ENCODE measurements at regions of chr2 and their contacts with region 1.

Region 1: GRCh38 chr2:235595422-235596010 is 101.7 kb downstream of the AGAP1 start:
- DNase-seq: peak; percentile 49 to 68 (median 52)
- ATAC-seq: peak; percentile 81
- H3K4me3 ChIP-seq: no peak overlapping the region
- H3K27ac ChIP-seq: no peak overlapping the region
- H3K4me1 ChIP-seq: peaks cover 0 to 4% of the 10 kb centered on the region in 2 experiments; a peak in 2 of 5 replicates
- H3K27me3 ChIP-seq: no peaks in the 10 kb centered on the region
- CTCF ChIP-seq: peak; percentile 55 to 75 (median 71); a peak in 5 of 6 replicates
- EP300 ChIP-seq: no peak
- POLR2A ChIP-seq: no peak
- RAD21 ChIP-seq: peak; percentile 54 to 75

Region 2: GRCh38 chr2:235135990-235136561 is 459.4 kb before region 1 on chr2:
- CTCF ChIA-PET with region 1: interaction called, 11 read pairs
- POLR2A ChIA-PET with region 1: interaction called, 3 read pairs
- in situ Hi-C with region 1: no loop called
- intact Hi-C with region 1: loop called (anchors 2 kb)
- DNase-seq: peak; percentile 57 to 65 (median 60)
- ATAC-seq: peak; percentile 89
- H3K4me3 ChIP-seq: no peak overlapping the region
- H3K27ac ChIP-seq: no peak overlapping the region
- H3K4me1 ChIP-seq: no peaks in the 10 kb centered on the region
- H3K27me3 ChIP-seq: peaks cover 0 to 14% of the 10 kb centered on the region in 2 experiments; a peak in 2 of 5 replicates
- CTCF ChIP-seq: peak; percentile 62 to 67 (median 63)
- EP300 ChIP-seq: no peak
- POLR2A ChIP-seq: no peak
- RAD21 ChIP-seq: peak; percentile 32 to 59; a peak in 2 of 4 replicates

Region 3: DNA sequence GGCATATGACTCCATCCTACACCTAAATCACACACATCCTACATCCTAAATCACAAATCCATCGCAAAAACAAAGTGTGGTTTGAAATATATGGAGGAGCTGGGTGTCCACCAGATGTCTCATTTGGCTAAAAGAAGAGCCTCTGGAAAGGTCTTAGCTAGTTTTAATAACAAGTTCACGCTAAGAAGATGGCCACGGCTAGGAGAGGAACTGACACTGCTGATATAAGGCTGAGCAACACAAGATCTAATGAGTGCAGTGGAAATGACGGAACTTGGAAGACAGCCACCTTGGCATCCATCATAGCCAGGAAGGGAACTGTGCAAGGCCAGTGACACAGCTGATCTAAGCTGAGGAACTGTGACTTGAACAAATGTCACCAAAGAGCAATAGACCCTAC is 161.7 kb before region 1 on chr2:
- CTCF ChIA-PET with region 1: interaction called, 18 read pairs
- POLR2A ChIA-PET with region 1: no interaction called
- in situ Hi-C with region 1: no loop called
- intact Hi-C with region 1: loop called (anchors 1 kb)
- DNase-seq: peak in 2 of 4 experiments; percentile 41 to 52
- ATAC-seq: peak; percentile 96
- H3K4me3 ChIP-seq: no peak overlapping the region
- H3K27ac ChIP-seq: peak overlapping the region; percentile 32; the same call in 1 of the 3 replicates
- H3K4me1 ChIP-seq: peaks cover 0 to 8% of the 10 kb centered on the region in 2 experiments; a peak in 3 of 5 replicates
- H3K27me3 ChIP-seq: no peaks in the 10 kb centered on the region
- CTCF ChIP-seq: peak; percentile 39 to 75 (median 48); a peak in 5 of 6 replicates
- EP300 ChIP-seq: peak; percentile 44; the same call in 1 of the 2 replicates
- POLR2A ChIP-seq: no peak
- RAD21 ChIP-seq: peak; percentile 82 to 88

Region 4: DNA sequence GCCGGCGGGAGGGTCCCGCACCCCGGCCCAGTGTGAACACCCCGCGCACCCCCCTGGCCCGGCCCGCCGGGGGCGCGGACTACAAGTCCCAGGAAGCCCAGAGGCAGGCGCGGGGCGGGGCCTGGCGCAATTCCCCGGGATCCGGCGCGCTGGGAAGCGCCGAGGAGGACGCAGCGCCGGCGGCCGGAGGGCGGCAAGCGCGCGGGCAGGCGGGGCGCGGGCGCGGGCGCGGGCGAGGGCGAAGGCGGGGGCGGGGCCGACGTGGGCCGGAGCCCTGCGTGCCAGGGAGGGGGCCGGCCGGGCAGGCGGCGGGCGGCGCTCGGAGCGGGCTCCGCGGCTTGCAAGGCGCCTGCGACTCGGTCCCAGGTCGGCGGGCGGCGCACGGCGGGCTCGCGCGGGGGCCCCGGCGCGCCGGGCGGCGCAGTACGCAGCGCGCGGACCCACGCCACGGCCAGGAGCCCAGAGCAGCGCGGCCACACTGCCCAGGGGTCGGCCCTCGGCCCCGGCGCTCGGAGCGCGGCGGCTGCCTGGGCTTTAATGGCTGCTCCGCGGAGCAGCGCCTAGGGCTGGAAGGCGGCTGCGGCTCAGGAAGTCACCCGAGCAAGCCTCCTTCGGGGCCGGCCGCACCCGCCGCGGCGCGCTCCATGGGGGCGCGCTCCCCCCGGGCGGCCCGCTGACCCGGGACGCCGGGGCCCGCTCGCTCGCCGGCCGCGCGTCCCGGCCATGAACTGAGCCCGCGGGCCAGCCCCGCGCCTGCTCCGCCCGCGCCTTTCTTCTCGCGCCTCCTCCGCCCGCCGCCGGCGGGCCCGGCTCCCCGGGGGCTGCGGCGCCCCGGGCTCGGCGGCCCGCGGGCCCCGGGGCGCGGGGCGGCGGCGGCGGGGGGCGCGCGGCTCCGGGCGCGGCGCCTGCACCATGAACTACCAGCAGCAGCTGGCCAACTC is 101.5 kb before region 1 on chr2 and contains the start of gene AGAP1:
- CTCF ChIA-PET with region 1: no interaction called
- POLR2A ChIA-PET with region 1: no interaction called
- in situ Hi-C with region 1: no loop called
- intact Hi-C with region 1: loop called (anchors 5 kb)
- DNase-seq: peak; percentile 80 to 85 (median 83)
- ATAC-seq: peak; percentile 81
- H3K4me3 ChIP-seq: peak within 1 kb of the TSS; percentile 62
- H3K27ac ChIP-seq: peak within 1 kb of the TSS; percentile 66; the same call in 2 of the 3 replicates
- H3K4me1 ChIP-seq: peaks cover 28 to 38% of the 10 kb centered on the region in 2 experiments; a peak in 4 of 5 replicates
- H3K27me3 ChIP-seq: no peaks in the 10 kb centered on the region
- CTCF ChIP-seq: no peak
- EP300 ChIP-seq: no peak
- POLR2A ChIP-seq: no peak
- RAD21 ChIP-seq: no peak
- polyA plus RNA-seq, gene AGAP1: 1.3 to 2.3 TPM

Region 5: GRCh38 chr2:235746257-235747084 is 151.0 kb after region 1 on chr2:
- CTCF ChIA-PET with region 1: interaction called, 19 read pairs
- POLR2A ChIA-PET with region 1: interaction called, 3 read pairs
- in situ Hi-C with region 1: no loop called
- intact Hi-C with region 1: loop called (anchors 1 kb)
- DNase-seq: peak; percentile 57 to 70 (median 64)
- ATAC-seq: peak; percentile 98
- H3K4me3 ChIP-seq: no peak overlapping the region
- H3K27ac ChIP-seq: no peak overlapping the region
- H3K4me1 ChIP-seq: peaks cover 0 to 4% of the 10 kb centered on the region in 2 experiments; a peak in 1 of 5 replicates
- H3K27me3 ChIP-seq: no peaks in the 10 kb centered on the region
- CTCF ChIP-seq: peak; percentile 61 to 83 (median 70)
- EP300 ChIP-seq: no peak
- POLR2A ChIP-seq: no peak
- RAD21 ChIP-seq: peak; percentile 47 to 72

Region 6: GRCh38 chr2:236503100-236503499 is 907.6 kb after region 1 on chr2:
- CTCF ChIA-PET with region 1: no interaction called
- POLR2A ChIA-PET with region 1: no interaction called
- in situ Hi-C with region 1: no loop called
- intact Hi-C with region 1: no loop called
- DNase-seq: no peak
- ATAC-seq: no peak
- H3K4me3 ChIP-seq: no peak overlapping the region
- H3K27ac ChIP-seq: no peak overlapping the region
- H3K4me1 ChIP-seq: no peaks in the 10 kb centered on the region; a peak in 1 of 5 replicates
- H3K27me3 ChIP-seq: peaks cover 0 to 8% of the 10 kb centered on the region in 2 experiments; a peak in 2 of 5 replicates
- CTCF ChIP-seq: no peak
- EP300 ChIP-seq: no peak
- POLR2A ChIP-seq: no peak
- RAD21 ChIP-seq: no peak